Posterior vena cava (tissue), 2 donors: ENCODE measurements at regions of chr4 and their contacts with region 1.

Region 1: DNA sequence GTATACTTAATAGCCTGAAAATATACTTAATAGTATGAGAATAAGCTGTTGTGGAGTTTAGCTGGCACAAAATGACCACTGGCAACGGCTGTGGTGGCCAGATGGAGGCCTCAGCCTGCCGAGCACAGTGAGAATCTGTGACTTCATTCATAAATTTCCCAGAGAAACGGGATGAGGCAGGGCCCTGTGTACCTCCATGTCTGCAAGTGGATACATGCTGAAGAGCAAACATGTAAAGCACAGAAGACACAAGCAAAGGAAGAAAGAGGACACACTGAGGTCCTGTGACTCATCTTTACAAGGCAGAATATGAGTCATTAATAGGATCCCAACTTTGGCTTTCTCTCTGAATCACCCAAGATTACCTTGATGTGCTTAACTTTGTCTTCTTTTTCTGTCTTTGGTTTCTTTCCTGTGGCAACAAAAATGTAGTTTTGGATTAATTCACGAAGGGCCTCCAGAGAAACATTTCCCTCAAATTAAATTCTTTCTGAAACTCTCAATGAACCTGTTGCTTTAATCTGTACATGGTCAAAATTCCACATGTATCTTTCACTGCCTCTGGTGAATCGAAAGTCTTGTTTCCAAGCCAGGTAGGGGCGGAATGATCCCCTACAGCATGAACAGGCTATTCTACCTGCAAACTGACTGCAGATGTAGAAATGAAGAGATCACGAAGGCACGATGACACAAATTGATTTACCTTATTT is 56.4 kb downstream of the IRF2 start:
- DNase-seq: no peak

Region 2: GRCh38 chr4:184122631-184123408 is 295.1 kb before region 1 on chr4:
- intact Hi-C with region 1: no loop called
- DNase-seq: peak; percentile 14

Region 3: GRCh38 chr4:184337907-184338306 is 80.0 kb before region 1 on chr4:
- intact Hi-C with region 1: loop called in 1 of 2 experiments (anchors 2 kb)
- DNase-seq: no peak

Region 4: DNA sequence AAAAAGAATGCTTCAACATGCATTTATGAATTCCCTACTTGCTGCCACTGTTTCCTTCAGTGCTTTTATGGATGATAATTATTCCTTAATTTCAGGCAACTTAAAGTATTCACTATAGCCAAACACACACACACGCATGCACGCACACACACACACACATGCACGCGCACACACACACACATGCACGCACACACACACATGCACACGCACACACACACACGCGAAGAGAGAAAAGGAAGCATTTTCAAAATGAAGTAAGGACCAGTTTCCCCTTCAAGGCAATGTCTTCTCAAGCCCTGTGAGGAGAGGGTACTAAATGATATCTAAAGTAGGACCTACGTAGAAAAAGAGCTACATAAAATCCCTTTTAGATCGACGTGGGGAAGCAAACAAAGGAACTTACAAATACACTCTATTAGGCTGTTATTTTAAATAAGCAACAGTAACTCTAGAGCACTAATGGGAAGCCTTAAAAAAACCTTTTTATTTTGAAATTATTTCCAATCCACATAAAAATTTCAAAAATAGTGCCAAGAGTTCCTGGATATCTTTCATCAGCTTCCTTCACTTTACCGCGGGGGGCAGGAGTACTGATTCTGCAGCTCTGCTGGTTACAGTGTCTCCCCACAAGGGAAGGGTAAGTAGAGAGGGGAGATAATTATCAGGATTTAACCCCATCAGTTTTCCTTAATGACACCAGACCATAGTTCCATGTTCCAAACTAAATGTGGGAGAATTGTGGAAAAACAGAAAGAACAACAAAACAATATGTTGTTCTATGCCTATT is 42.7 kb after region 1 on chr4:
- intact Hi-C with region 1: loop called in 1 of 2 experiments (anchors 10 kb)
- DNase-seq: no peak